ENCODE measurements at regions of chr15 and their contacts with region 1.

Region 1: GRCh38 chr15:50354838-50355618 is at the start of gene GABPB1:
- DNase-seq: peak; percentile 94
- ATAC-seq: peak; percentile 92
- total RNA-seq, gene GABPB1: 10.9 TPM

Region 2: DNA sequence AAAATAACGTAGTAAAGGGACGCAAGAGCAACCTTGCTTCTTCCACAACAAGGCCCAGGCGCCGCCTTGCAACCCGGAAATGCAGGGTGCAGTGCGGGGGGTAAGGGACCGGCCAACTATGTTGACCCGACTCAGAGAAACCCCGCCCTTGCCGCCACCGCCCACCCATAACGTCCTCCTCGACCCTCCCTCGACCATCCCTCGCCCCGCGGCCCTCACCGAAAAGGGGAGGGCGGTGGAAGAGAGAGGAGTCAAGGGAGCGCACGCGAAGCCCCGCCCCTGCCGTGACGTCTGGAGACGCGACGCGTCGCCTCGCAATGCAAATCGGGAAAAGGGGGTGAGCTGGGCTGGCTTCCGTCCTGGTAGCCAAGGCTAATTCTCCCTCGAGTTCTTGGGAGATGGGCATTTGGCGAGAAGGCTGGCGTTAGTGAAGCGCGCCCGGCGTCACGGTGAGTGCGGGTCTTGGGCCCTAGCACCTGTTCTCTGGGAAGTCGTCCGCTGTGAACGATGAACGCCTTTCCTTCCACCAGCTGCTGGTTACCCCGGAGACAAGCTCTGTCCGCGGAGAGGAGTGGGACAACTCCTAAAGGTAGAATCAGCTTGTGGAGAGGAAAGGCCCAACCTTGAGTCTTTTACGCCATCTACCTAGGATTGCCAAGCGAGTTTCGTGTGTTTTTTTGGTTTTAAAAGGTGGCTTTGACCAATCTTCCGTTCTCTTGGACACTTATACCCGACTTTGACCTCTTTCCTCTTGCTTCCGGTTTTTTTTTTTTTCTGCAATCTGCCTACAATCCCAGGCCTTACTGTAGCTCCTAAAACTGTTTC is 69.2 kb after region 1 on chr15 and contains the start of gene USP8:
- intact Hi-C with region 1: loop called (anchors 2 kb)
- DNase-seq: peak; percentile 98
- ATAC-seq: peak; percentile 99
- total RNA-seq, gene USP8: 44.7 TPM

Measured in Right ventricle myocardium inferior (tissue), 1 donor.